Posterior vena cava (tissue), 2 donors: ENCODE measurements at regions of chr6 and their contacts with region 1.

Region 1: DNA sequence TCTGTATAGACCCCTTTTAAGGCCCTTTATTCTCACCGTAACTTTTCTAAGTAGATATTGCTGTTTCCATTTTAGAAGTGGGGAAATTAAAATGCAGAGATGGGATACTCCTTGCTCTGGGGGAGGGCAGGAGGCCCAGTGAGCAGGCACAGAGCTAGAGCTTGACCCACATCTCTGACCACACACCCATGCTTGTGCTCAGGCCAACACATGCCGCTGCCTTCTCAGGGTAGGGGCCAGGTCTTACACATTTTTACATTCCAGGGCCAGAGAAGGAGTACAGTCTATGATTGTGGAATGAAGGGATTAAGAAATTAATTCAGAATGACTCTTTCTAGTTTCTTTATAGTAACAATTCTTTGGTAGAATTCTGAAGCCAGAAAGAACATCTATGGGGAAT is 104.8 kb downstream of the SOBP start:
- DNase-seq: no peak

Region 2: DNA sequence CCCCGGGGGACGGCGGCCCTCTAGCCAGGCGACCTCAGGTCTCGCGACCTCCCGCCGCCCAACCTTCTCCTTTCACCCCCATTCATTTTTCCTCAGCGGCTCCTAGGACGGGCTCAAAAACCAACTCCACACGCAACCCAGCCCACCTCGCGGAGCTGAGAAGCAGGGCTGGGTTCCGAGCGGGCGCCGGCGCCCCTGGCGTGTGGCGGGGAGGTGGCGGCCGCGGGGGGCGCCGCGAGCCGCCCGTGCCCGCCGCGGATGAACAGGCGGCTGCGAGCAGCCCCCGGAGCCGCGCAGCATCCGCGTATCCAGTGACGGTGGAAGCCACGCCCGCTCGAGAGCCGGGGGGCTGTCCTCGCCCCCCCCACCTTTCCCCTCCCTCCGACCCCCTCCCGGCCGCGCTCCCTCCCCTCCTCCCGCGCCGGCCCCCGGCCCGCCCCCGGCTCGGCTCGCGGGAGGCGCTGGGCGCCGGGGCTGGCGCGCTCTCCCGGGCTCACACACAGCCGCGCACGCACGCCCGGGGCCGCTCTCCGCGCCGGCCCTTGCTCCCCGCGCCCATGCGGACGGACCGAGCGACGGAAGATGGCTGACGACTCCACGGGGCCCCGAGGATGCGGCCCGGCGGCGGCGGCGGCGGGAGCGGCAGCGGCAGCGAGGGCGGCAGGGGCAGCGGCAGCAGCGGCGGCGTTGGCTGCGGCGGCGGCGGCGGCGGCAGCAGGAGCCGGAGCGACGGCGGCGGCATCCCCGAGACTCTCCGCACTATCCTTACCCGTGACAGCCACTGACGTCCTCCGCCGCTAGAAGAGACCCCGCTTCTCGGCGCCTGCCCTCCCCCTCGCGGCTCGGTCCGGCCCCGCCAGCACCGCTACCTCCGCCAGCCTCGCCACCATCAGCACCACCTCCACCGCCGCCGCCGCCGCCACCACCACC is 104.8 kb before region 1 on chr6 and contains the start of gene SOBP:
- intact Hi-C with region 1: loop called in 1 of 2 experiments (anchors 10 kb)
- DNase-seq: peak; percentile 86
- total RNA-seq, gene SOBP: 18.7 to 20.0 TPM

Region 3: GRCh38 chr6:107576852-107577251 is 17.9 kb before region 1 on chr6:
- intact Hi-C with region 1: no loop called
- DNase-seq: no peak